AG04450 (cell line): ENCODE measurements at regions of chr6 and their contacts with region 1.

Region 1: DNA sequence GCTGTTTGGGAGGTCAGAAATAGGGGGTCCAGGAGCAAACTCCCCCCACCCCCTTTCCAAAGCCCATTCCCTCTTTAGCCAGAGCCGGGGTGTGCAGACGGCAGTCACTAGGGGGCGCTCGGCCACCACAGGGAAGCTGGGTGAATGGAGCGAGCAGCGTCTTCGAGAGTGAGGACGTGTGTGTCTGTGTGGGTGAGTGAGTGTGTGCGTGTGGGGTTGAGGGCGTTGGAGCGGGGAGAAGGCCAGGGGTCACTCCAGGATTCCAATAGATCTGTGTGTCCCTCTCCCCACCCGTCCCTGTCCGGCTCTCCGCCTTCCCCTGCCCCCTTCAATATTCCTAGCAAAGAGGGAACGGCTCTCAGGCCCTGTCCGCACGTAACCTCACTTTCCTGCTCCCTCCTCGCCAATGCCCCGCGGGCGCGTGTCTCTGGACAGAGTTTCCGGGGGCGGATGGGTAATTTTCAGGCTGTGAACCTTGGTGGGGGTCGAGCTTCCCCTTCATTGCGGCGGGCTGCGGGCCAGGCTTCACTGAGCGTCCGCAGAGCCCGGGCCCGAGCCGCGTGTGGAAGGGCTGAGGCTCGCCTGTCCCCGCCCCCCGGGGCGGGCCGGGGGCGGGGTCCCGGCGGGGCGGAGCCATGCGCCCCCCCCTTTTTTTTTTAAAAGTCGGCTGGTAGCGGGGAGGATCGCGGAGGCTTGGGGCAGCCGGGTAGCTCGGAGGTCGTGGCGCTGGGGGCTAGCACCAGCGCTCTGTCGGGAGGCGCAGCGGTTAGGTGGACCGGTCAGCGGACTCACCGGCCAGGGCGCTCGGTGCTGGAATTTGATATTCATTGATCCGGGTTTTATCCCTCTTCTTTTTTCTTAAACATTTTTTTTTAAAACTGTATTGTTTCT is at the start of gene VEGFA:
- DNase-seq: peak; percentile 70
- H3K4me3 ChIP-seq: peak within 1 kb of the TSS; percentile 96
- H3K27ac ChIP-seq: peak within 1 kb of the TSS; percentile 85
- H3K27me3 ChIP-seq: no peaks in the 10 kb centered on the region
- CTCF ChIP-seq: peak; percentile 99
- polyA plus RNA-seq, gene VEGFA: 189 and 239 TPM in 2 replicates

Region 2: DNA sequence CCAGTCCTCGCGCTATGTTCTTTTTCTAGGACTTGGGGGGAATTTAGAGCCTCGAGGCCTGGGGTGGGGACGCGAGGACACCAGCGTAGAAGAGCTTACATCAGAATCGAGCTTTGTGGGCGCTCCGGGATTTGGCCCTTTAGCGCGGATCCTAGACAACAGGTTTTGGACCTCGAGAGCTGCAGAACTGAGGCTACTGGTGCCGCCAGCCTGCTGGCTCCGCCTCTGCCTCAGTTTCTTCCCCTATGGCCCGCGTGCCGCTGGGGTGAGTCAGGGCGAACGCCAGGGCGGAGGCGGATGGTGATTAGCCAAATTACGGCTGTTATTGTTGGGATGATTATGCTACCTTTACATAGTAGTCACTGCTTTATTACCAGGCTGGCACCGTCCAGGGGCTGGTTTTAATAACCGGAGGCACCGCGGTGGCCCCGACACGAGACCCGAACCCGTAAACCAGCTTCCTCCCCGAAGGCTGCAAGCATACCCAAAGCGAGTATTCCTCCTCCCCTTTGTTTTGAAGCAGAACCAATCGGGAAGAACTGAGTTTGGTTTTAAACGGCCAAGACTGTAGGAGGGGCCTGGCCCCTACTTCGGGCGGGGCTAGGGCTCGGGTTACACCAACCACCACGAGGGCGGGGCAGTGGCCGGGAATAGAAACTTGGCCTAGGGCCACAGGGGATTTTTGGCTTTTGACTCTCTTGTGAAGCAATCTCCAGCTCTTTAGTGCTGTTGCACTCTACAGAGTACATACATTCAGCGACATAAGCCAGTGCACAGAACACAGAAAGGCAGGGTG is 140.1 kb before region 1 on chr6:
- CTCF ChIA-PET with region 1: interaction called, 3 read pairs
- POLR2A ChIA-PET with region 1: interaction called, 10 read pairs
- DNase-seq: peak; percentile 94
- H3K4me3 ChIP-seq: peak overlapping the region; percentile 84
- H3K27ac ChIP-seq: peak overlapping the region; percentile 96
- H3K27me3 ChIP-seq: no peaks in the 10 kb centered on the region
- CTCF ChIP-seq: no peak

Region 3: DNA sequence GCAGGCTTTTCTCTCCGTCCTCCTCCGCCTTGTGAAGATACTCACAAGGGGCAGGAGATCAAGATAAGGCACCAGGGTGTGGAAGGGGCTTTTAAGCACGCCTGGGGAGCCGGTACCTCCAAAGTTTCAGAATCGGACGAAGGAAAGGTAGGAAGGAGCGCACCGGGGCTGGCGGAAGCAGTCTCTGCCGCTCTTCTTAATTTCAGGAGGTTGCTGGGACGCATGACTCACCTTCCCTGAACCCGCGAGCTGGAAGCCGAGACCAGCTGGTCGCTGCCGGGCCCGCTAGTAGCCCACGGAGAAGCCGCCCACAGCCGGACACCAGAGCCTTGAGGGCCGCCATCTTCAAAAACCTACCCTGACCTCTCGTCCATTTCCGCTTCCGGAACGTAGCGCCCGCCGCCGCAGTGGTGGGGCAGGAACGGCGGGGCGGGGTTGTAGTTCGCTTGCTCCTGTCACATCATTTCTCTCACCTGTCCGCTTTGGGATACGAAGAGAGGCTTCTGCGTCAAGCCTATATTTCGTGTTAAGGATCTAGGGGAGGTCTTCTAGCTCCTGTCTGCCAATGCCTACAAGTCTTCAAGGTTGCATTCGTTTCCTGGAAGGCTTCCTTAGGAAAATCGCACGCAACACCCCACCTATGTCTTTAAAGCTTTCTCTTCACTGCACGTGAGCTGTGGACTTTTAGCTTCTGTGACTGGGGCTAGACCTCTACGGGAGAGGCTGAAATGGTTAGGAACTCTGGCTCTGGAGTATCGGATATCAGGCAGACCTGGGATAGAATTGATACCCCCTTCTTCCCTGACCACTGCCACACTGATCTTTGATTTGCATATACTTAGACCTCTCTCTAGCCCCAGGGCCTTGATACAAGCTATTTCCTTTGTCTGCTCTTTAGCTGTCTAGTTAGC is 82.1 kb before region 1 on chr6 and contains the start of gene MRPS18A:
- CTCF ChIA-PET with region 1: interaction called, 14 read pairs
- POLR2A ChIA-PET with region 1: no interaction called
- DNase-seq: no peak
- H3K4me3 ChIP-seq: peak within 1 kb of the TSS; percentile 93
- H3K27ac ChIP-seq: peak within 1 kb of the TSS; percentile 92
- H3K27me3 ChIP-seq: no peaks in the 10 kb centered on the region
- CTCF ChIP-seq: no peak
- polyA plus RNA-seq, gene MRPS18A: 41.0 and 59.7 TPM in 2 replicates

Region 4: DNA sequence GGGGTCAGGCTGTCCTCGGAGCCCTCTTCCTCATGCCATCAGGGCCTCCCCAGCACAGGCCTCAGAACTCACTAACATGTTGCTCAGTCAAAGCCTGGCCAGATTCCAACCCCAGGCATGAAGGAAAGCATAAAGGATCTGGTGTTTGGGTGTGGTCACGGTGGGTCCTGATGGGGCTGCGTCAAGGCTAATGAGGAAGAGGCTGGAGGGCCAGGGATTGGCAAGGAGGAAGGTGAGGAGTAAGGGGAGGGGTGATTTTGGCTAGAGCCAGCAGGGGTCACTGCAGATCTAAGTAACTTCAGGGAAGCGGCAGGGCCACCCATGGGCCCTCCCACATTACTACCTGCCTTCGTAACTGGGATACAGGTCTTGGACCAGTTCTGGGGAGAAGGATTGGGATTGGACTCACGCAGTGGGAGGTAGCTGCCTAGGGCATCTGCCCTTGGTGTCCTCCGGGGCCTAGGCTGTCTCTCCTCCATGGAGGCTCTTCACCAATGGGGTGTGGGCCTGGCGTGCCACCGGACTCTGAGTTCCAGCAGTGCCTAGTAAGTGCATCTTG is 46.0 kb before region 1 on chr6:
- CTCF ChIA-PET with region 1: interaction called, 14 read pairs
- POLR2A ChIA-PET with region 1: interaction called, 7 read pairs
- DNase-seq: no peak
- H3K4me3 ChIP-seq: no peak overlapping the region
- H3K27ac ChIP-seq: no peak overlapping the region
- H3K27me3 ChIP-seq: peaks cover 8% of the 10 kb centered on the region
- CTCF ChIP-seq: peak; percentile 61

Region 5: GRCh38 chr6:43758617-43759050 is 11.1 kb before region 1 on chr6:
- CTCF ChIA-PET with region 1: interaction called, 22 read pairs
- POLR2A ChIA-PET with region 1: no interaction called
- DNase-seq: no peak
- H3K4me3 ChIP-seq: no peak overlapping the region
- H3K27ac ChIP-seq: no peak overlapping the region
- H3K27me3 ChIP-seq: peaks cover 34% of the 10 kb centered on the region
- CTCF ChIP-seq: peak; percentile 65

Region 6: DNA sequence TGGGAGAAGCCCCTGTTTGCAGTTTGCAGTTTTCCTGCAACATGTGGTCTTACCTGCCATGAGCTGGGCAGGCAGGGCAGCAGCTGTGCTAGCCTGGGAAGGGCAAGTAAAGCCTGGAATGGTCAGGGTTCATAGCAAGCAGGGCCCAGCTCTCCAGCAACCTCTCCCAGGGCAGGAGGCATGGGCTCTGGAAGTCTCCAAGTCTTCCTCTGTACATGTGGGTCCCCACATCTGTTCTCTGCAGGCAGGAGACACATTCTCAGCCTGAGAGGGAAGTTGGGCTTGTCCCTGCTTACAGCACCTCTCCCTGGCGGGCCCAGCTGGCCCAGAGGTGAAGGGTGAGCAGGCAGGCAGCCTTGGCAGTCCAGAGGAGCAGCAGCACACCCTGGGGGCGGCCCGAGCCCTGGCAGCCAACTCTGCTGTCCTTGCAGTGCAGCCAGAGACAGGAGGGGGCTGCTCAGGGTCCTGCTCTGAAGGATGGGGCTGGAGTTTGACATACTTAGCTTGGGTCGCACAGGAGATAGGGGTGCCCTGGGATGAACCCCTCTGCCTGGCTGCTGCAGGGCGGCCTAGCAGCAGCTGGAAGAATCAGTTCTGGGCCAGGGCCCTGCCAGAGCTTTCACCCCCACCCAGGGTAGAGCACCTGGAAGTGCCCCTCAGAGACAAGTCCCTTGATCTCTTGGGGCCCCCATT is 181.4 kb after region 1 on chr6:
- CTCF ChIA-PET with region 1: interaction called, 10 read pairs
- POLR2A ChIA-PET with region 1: interaction called, 4 read pairs
- DNase-seq: no peak
- H3K4me3 ChIP-seq: no peak overlapping the region
- H3K27ac ChIP-seq: no peak overlapping the region
- H3K27me3 ChIP-seq: no peaks in the 10 kb centered on the region
- CTCF ChIP-seq: peak; percentile 37

Region 7: DNA sequence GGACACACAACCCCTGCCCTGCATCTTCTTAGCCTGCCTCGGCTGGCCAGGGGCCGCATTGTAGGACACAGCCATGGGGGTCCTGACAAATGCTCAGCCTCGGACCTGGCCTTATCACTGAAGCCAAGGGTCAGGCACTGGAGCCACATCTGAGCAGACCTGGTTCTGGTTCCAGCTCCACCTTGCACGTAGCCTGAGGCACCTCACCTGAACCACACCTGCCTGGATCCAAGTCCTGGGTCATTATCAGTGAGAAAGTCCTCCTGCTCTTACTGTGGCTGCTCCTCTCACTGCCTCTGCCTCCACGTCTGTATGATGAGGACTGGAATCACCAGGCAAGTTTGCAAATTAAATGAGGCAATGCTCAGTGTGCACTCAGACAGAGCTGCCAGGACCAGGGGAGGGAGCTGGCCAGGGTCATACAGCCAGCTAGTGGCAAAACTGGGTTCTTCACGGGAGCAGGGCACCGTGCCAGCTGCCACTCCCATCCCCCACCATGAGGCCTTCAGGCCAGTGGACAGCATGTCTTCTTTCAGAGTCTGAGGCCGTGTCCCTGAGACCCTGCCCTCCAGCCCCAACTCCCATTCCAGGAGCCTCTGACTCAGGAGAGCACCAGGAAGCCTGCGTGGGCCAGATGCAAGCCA is 317.3 kb after region 1 on chr6:
- CTCF ChIA-PET with region 1: interaction called, 91 read pairs
- POLR2A ChIA-PET with region 1: interaction called, 3 read pairs
- DNase-seq: no peak
- H3K4me3 ChIP-seq: no peak overlapping the region
- H3K27ac ChIP-seq: no peak overlapping the region
- H3K27me3 ChIP-seq: no peaks in the 10 kb centered on the region
- CTCF ChIP-seq: no peak